HEK293 (cell line): ENCODE measurements at regions of chr10 and their contacts with region 1.

Region 1: GRCh38 chr10:43683451-43684291 is 35.0 kb upstream of the ZNF32 start:
- H3K4me3 ChIP-seq: no peak overlapping the region
- H3K27ac ChIP-seq: no peak overlapping the region
- H3K4me1 ChIP-seq: no peaks in the 10 kb centered on the region
- CTCF ChIP-seq: 0 out of 2 replicates have a peak, but pooled peaks have one; percentile 10

Region 2: DNA sequence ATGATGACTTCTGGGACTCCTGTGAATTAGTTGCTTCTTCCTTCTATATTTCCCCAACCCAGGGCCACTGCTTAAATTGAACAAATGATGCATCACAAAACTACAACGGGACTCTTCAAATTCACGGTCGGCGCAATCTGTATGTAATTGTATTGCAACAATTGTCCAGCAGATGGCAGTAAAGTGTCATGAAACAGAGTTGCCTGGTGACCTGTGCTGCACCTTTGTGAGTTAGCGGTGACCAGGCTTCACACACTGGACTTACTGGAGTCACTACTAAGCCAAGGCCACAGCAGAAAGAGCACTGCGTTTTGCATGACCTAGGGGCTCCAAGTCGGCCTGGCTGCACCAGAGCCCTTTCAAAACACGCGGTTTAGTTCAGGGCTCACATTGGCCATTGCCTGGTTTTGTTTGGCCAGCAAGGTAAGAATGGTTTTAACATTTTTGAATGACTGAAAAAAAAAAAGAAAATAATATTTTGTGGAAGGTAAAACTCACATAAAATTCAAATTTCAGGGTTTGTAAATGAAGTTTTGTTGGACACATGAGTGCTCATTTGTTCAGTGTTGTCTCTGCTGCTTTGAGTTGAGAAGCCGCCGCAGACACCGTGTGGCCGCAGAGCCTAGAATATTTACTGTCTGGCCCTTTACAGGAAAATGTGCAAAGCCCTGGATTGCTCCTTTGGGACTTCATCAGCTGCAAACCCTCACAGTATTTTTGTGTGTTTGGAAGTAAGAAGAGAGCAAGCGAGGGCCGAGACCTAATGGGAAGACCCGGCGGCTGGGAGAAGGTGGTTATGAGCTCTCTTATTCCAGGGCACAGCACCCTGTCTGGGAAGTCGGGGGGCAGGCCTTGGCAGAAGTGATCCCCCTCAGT is 11.8 kb before region 1 on chr10:
- CTCF ChIA-PET with region 1: interaction called, 19 read pairs
- POLR2A ChIA-PET with region 1: no interaction called
- H3K4me3 ChIP-seq: no peak overlapping the region
- H3K27ac ChIP-seq: no peak overlapping the region
- H3K4me1 ChIP-seq: no peaks in the 10 kb centered on the region
- CTCF ChIP-seq: peak; percentile 62